Heart right ventricle (tissue), 16 donors: ENCODE measurements at regions of chr6 and their contacts with region 1.

Region 1: GRCh38 chr6:2900821-2901644 is 2.1 kb downstream of the SERPINB9 start:
- DNase-seq: peak in 1 of 2 donors; percentile 71
- ATAC-seq: peak in 1 of 8 donors; percentile 17
- H3K4me3 ChIP-seq: peak overlapping the region in 8 of 10 donors; percentile 12 to 93 (median 72)
- H3K27ac ChIP-seq: peak overlapping the region in 4 of 10 donors; percentile 11 to 94 (median 66)
- H3K4me1 ChIP-seq: peaks cover 0 to 41% (median 28%) of the 10 kb centered on the region in 9 donors
- H3K27me3 ChIP-seq: no peaks in the 10 kb centered on the region
- CTCF ChIP-seq: no peak

Region 2: GRCh38 chr6:2733324-2733723 is 167.7 kb before region 1 on chr6:
- intact Hi-C with region 1: no loop called
- DNase-seq: peak; percentile 42 to 64
- ATAC-seq: peak; percentile 57 to 82 (median 72)
- H3K4me3 ChIP-seq: no peak overlapping the region
- H3K27ac ChIP-seq: peak overlapping the region in 9 of 10 donors; percentile 69 to 88 (median 82)
- H3K4me1 ChIP-seq: peaks cover 2 to 67% (median 37%) of the 10 kb centered on the region in 9 donors
- H3K27me3 ChIP-seq: no peaks in the 10 kb centered on the region
- CTCF ChIP-seq: no peak

Region 3: GRCh38 chr6:2853761-2854395 is 47.2 kb before region 1 on chr6:
- intact Hi-C with region 1: loop called in 7 of 10 experiments (anchors 5 to 10 kb)
- DNase-seq: no peak
- ATAC-seq: peak in 7 of 8 donors; percentile 21 to 44 (median 35)
- H3K4me3 ChIP-seq: peak overlapping the region in 9 of 10 donors; percentile 7 to 52 (median 40)
- H3K27ac ChIP-seq: peak overlapping the region; percentile 57 to 95 (median 78)
- H3K4me1 ChIP-seq: peaks cover 14 to 71% (median 49%) of the 10 kb centered on the region in 9 donors
- H3K27me3 ChIP-seq: no peaks in the 10 kb centered on the region
- CTCF ChIP-seq: peak in 6 of 9 donors; percentile 36 to 65 (median 56)

Region 4: GRCh38 chr6:2881423-2881822 is 19.6 kb before region 1 on chr6:
- intact Hi-C with region 1: loop called in 1 of 10 experiments (anchors 2 kb)
- DNase-seq: no peak
- ATAC-seq: no peak
- H3K4me3 ChIP-seq: peak overlapping the region in 1 of 10 donors; percentile 10
- H3K27ac ChIP-seq: peak overlapping the region in 1 of 10 donors; percentile 32
- H3K4me1 ChIP-seq: peaks cover 0 to 35% (median 16%) of the 10 kb centered on the region in 9 donors
- H3K27me3 ChIP-seq: no peaks in the 10 kb centered on the region
- CTCF ChIP-seq: no peak